ENCODE measurements at regions of chrX and their contacts with region 1.

Region 1: DNA sequence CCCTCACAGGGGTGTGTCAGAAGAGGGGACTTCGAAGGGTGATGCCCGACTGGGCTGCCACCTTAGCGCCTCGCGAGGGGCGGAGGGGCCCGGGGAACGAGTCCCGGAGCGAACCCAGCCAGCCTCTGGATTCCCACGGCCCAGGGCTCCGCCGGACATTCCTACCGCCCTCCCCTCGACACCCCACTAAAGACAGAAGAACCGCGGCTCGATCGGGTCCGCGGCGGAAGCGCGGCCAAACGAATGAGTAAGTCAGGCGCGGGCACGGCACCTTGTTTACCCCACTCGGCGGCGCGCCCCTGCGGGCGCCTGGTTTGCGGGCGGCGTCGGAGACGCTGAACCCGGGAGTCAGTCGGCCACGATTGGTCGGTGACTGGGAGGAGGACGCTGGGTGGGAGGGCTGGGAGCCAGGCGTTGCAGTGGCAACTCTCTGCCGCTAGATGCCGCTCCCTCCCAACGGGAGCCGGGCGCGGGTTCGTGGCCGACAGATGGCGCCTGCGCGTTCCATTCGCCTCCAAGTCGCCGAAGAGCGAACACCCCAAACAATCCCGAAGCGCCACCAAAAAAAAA is 1.4 kb upstream of the STAG2 start:
- DNase-seq: peak; percentile 91
- H3K4me3 Mint-ChIP-seq: peak overlapping the region; percentile 96
- H3K27ac Mint-ChIP-seq: peak overlapping the region; percentile 99
- H3K4me1 Mint-ChIP-seq: peaks cover 13% of the 10 kb centered on the region
- H3K27me3 Mint-ChIP-seq: no peaks in the 10 kb centered on the region

Region 2: GRCh38 chrX:123764967-123765871 is 194.9 kb before region 1 on chrX:
- CTCF ChIA-PET with region 1: no interaction called
- intact Hi-C with region 1: no loop called
- DNase-seq: peak; percentile 79
- H3K4me3 Mint-ChIP-seq: peak overlapping the region; percentile 72
- H3K27ac Mint-ChIP-seq: peak overlapping the region; percentile 73
- H3K4me1 Mint-ChIP-seq: peaks cover 3% of the 10 kb centered on the region
- H3K27me3 Mint-ChIP-seq: no peaks in the 10 kb centered on the region

Region 3: GRCh38 chrX:123859846-123860838 is 100.0 kb before region 1 on chrX and contains the start of gene XIAP:
- CTCF ChIA-PET with region 1: no interaction called
- intact Hi-C with region 1: loop called (anchors 1 kb)
- DNase-seq: peak; percentile 70
- H3K4me3 Mint-ChIP-seq: peak within 1 kb of the TSS; percentile 79
- H3K27ac Mint-ChIP-seq: peak within 1 kb of the TSS; percentile 92
- H3K4me1 Mint-ChIP-seq: peaks cover 11% of the 10 kb centered on the region
- H3K27me3 Mint-ChIP-seq: peaks cover 2% of the 10 kb centered on the region
- total RNA-seq, gene XIAP: 24.0 to 24.5 TPM

Region 4: DNA sequence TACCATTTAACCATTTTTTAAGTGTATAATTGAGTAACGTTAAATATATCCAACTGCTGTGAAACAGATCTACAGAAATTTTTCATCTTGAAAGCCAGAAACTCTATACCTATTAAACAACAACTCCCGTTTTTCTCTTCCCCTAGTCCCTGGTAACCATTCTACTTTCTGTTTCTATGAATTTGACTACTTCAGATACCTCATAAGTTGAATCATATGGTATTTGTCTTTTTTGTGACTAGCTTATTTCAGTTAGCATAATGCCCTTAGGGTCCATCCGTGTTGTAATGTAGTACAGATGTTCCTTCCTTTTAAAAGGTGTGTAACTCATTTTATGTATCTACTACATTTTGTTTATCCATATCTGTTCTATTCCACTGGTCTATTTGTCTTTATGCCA is 50.0 kb after region 1 on chrX:
- CTCF ChIA-PET with region 1: interaction called, 4 read pairs
- intact Hi-C with region 1: loop called (anchors 2 kb)
- DNase-seq: no peak
- H3K4me3 Mint-ChIP-seq: no peak overlapping the region
- H3K27ac Mint-ChIP-seq: peak overlapping the region; percentile 0
- H3K4me1 Mint-ChIP-seq: peaks cover 69% of the 10 kb centered on the region
- H3K27me3 Mint-ChIP-seq: no peaks in the 10 kb centered on the region

Region 5: DNA sequence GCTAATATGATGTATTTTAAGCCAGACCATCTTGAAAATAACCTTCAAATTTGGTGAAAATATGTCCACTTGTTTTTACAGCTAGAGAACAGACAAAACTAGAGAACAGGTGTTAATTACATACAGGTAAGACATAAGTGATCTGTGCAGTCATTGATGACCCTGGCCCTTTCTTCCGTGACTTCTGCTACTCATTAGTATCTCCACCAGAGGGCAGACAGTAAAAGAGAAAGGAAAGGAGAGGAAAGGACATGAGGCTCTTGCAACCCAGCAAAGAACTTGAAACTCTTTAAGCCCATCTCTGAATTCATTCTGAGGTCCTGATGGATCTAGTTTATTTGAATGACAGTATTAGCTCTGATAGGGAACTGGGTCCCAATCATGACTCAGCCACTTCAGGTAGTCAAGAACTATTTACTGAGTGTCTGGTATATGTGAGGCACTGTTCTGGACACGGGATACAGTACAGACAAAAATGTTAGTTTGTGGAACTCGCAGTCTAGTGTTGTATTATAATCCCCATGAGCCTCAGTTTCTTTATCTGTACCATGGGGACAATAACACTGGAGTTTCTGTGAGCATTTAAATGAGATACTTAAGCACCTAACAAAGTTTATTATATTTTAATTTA is 251.3 kb after region 1 on chrX:
- CTCF ChIA-PET with region 1: no interaction called
- intact Hi-C with region 1: loop called (anchors 1 kb)
- DNase-seq: peak; percentile 27
- H3K4me3 Mint-ChIP-seq: no peak overlapping the region
- H3K27ac Mint-ChIP-seq: no peak overlapping the region
- H3K4me1 Mint-ChIP-seq: peaks cover 38% of the 10 kb centered on the region
- H3K27me3 Mint-ChIP-seq: no peaks in the 10 kb centered on the region

Region 6: GRCh38 chrX:124346117-124346876 is 386.2 kb after region 1 on chrX and contains the start of gene SH2D1A:
- CTCF ChIA-PET with region 1: no interaction called
- intact Hi-C with region 1: loop called (anchors 2 kb)
- DNase-seq: peak; percentile 29
- H3K4me3 Mint-ChIP-seq: peak within 1 kb of the TSS; percentile 86
- H3K27ac Mint-ChIP-seq: peak within 1 kb of the TSS; percentile 95
- H3K4me1 Mint-ChIP-seq: peaks cover 45% of the 10 kb centered on the region
- H3K27me3 Mint-ChIP-seq: no peaks in the 10 kb centered on the region
- total RNA-seq, gene SH2D1A: 17.0 to 17.2 TPM

Region 7: DNA sequence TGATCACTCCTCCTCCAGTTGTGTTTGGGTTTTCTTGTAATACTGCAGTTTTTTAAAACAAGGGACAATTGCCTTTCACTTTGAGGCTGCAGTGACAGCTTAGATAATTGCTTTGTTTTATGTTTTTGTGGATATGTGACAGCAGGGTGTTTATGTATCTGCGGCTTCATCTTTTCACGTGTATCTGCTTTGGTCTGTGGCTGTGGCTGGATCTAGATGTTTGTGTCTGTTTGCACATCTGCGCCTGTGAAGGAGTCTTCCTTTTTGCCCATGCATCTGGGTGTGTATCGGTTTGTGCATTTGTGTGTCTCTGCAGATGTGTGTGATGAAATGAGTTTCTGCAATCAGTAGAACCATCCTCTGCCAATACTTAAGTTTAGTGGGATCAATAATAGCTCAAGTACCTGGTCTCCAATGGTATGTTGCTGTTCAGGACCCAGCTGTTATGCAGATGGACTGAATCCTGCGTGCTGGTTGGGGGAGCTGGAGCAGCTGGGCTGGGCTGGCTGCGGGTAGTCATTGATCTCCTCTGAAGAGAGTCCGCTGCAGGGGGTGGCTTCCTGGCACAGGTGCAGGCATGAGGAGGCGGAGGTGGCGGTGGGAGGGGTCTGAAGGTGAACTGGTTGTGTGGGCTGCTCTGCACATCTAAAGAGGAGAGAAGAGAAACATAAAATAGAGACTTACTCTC is 776.6 kb after region 1 on chrX:
- CTCF ChIA-PET with region 1: no interaction called
- intact Hi-C with region 1: loop called (anchors 5 kb)
- DNase-seq: peak; percentile 60
- H3K4me3 Mint-ChIP-seq: peak overlapping the region; percentile 67
- H3K27ac Mint-ChIP-seq: peak overlapping the region; percentile 16
- H3K4me1 Mint-ChIP-seq: peaks cover 41% of the 10 kb centered on the region
- H3K27me3 Mint-ChIP-seq: no peaks in the 10 kb centered on the region